ENCODE measurements at regions of chr1 and their contacts with region 1.

Region 1: DNA sequence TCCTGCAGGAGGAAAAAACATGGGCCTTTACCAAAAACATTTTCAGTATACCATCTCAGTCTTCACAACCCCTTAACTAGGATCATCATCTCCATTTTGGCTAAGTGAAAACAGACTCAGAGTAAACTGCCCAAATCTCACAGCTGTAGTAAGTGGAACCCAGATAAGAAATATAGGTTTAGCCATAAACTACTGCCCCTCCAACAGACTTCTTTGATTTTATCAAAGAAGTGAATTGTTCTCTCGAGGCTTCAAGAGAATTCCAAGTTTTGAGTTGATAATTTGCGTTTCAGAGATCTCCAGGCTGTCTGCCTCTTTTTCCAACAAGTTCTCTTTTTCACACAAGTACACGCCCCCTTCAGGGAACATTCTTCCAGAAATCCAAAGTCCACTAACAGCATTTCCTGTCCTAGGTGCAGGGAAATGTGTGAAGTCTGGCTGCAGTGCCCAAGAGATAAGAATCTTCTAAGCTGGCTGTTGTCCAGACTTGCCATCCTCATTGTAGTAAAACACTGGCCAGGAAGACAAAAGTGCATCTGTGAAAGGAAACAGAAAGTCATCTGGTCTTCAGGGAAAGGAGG is 30.8 kb downstream of the RNF19B start:
- DNase-seq: no peak
- CTCF ChIP-seq: no peak

Region 2: DNA sequence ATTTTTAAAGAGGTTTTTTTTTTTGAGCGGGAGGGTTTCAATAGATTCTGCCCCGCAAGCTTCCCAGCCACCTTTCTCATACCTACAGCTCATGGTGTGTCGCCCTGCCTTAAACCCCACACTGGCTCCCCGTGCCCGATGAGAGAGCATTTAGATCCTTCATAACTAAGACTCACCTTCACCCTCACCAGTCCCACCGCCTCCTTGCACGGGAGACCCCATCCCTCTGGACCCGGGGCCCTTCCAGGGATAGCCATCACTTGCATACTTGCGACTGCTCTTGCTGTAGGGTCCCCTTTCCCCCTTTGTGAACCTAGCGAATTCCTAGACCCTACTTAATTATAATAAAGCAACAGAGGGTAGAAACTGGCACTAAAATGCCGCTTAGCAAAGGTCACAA is 42.1 kb after region 1 on chr1:
- CTCF ChIA-PET with region 1: no interaction called
- POLR2A ChIA-PET with region 1: no interaction called
- DNase-seq: no peak
- CTCF ChIP-seq: no peak

Region 3: DNA sequence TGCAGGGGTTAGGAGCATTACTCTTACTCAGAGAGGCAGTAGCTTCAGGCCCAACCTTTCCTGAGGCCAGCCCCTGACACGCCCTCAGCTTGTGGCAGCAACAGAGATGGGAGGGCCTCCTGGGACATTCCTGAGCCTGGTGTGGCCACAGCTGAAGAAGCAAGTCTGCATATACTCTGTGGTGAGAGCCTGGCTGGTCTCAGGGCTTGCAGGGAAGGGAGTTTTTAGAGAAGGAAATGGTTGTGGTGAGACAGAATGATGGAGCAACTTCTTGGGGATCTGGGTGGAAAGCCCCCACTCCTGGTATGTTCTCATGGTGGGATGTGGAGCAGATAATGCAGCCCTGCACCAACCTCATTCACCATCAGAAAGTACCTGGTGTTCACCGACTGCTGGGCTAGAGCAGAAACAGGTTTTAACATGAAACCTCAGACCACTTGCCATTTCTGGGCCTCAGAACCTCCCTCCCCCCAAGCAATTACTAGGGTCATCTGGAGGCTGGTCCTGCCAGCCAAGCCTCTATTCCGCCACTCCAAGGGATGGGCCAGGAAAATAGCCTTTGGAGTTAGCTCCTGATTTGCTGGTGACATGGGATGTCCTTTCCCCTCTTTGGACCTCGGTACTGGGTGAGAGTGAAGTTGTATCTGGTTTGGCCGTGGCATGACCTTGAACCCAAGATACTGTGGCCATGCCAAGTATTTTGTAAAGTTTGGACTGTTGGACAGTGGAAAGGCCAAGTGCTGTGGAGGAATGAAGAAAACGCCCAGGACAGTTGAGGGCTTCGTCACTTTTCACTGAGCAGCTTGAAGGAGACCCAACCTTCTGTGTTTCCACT is 58.9 kb after region 1 on chr1:
- CTCF ChIA-PET with region 1: interaction called, 14 read pairs
- POLR2A ChIA-PET with region 1: no interaction called
- DNase-seq: peak; percentile 78
- CTCF ChIP-seq: no peak

Region 4: DNA sequence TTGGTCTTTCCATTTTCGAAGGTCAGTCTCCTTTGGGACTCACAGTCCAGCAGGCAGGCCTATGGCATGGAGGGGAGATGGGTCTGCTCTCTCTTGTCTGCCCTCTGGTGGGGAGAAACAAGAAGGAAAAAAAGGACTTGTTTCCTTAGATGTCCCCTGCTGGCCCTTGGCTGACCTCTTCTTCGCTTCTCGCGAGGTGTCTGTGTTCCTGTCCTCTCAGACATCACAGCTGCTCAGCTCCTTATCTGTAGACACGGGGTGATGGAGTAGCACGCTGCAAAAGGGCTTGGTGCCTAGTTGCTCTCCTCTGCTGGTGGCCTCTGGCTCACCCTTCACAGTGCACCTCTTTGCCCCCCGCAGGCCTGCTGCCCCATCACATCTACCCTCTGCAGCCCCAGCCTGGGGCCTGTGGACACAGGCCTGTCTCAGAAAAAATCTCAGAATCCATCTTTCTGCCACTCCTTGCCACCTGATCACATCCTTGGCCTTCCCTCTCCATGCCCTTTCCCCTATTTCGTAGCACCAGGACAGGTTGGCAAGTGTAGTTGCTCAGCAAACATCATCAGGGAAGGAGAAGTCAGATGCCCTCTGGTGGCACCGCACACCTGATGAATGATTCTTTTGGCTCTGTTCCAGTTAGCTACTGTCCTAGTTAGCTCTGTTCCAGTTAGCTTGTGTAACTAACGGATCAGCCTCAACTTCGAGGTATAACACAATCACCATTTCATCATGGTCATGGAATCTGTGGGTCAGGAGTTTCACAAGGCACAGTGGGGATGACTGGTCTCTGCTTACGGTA is 121.6 kb after region 1 on chr1:
- CTCF ChIA-PET with region 1: interaction called, 107 read pairs
- POLR2A ChIA-PET with region 1: no interaction called
- DNase-seq: peak; percentile 67
- CTCF ChIP-seq: peak; percentile 64

Region 5: GRCh38 chr1:33086384-33086850 is 152.6 kb after region 1 on chr1:
- CTCF ChIA-PET with region 1: interaction called, 41 read pairs
- POLR2A ChIA-PET with region 1: no interaction called
- DNase-seq: peak; percentile 62
- CTCF ChIP-seq: peak; percentile 81

Measured in GM10248 (cell line).